Left cardiac atrium (tissue), 4 donors: ENCODE measurements at regions of chr11 and their contacts with region 1.

Region 1: GRCh38 chr11:2526808-2527381 is 82.1 kb downstream of the KCNQ1 start:
- DNase-seq: peak; percentile 60
- ATAC-seq: peak in 1 of 2 donors; percentile 20

Region 2: GRCh38 chr11:2208691-2209369 is 318.1 kb before region 1 on chr11:
- intact Hi-C with region 1: loop called in 1 of 2 experiments (anchors 10 kb)
- DNase-seq: peak; percentile 35
- ATAC-seq: peak; percentile 56 to 63

Region 3: GRCh38 chr11:2305140-2305840 is 221.6 kb before region 1 on chr11:
- intact Hi-C with region 1: loop called (anchors 10 kb)
- DNase-seq: peak; percentile 93
- ATAC-seq: peak; percentile 52 to 55